ENCODE measurements at regions of chr11 and their contacts with region 1.

Region 1: DNA sequence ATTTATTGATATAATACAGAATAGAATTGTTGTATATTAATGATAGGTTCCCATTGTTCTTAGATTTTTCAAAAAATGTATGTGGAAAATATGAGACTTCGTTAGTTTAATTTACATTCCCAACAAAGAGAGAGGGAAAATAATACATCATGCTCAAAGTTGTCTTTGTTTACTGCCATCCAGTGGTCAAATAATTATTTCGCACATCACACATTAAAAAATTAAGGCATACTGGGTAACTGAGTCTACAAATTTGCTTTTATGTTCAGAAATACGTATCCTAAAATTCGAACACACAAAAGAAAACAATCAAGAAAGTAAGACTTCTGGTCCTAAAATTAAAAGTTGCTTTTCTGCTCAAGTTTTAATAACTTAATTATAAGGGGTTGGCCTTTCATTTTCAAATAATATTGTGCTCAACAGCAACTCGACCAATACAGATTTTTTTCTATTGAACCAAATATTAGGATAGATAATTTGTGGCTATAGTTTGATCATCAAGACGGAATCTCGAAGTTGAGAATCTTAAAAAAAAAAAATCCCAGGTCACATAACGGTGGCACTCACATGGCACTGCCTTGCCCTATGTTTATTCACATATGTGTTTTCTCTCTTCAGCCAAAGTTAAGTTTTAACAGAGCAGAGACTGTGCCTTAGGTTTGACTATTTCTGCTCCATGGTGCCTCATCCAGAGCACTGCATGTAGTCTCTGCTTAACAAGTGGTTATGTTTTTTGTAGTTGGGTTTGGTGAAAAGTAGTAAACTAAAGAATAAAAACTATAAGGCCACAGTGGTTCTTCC is 12.3 kb downstream of the PDGFD start:
- DNase-seq: peak; percentile 43
- H3K4me3 Mint-ChIP-seq: no peak overlapping the region
- H3K27ac Mint-ChIP-seq: no peak overlapping the region
- H3K4me1 Mint-ChIP-seq: no peaks in the 10 kb centered on the region
- H3K27me3 Mint-ChIP-seq: no peaks in the 10 kb centered on the region
- CTCF ChIP-seq: peak; percentile 51

Region 2: DNA sequence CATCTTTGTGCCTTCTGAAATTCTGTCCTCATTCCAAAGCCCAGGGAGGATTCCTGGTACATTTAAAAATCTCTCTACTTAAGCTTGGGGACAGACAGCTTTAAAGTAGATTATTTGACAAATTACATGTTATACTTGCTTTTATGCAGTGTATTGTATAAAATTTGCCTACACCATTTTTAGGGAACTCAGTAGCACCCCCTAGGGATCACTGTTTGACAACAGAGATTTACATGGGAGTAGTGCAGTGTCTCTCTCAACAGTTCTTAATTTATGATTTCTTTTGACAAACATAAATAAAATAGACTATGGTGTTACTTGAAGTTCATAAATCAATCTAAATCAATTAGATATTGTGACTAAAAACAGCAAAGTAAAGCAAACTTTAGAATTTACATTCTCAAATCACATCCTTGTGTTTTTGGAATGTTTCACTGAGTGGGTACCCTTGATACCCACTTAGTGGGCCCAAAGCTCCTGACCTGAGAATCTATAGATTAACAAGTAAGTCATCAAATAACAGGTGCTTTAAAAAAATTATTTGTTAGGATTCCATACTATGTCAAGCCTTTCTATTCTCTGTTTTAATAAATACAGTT is 613.6 kb before region 1 on chr11:
- CTCF ChIA-PET with region 1: no interaction called
- POLR2A ChIA-PET with region 1: no interaction called
- intact Hi-C with region 1: no loop called
- DNase-seq: peak; percentile 59
- H3K4me3 Mint-ChIP-seq: no peak overlapping the region
- H3K27ac Mint-ChIP-seq: no peak overlapping the region
- H3K4me1 Mint-ChIP-seq: peaks cover 13% of the 10 kb centered on the region
- H3K27me3 Mint-ChIP-seq: no peaks in the 10 kb centered on the region
- CTCF ChIP-seq: peak; percentile 52

Region 3: GRCh38 chr11:103927535-103927934 is 224.1 kb before region 1 on chr11:
- CTCF ChIA-PET with region 1: interaction called, 11 read pairs
- POLR2A ChIA-PET with region 1: interaction called, 6 read pairs
- intact Hi-C with region 1: loop called (anchors 1 kb)
- DNase-seq: peak; percentile 43
- H3K4me3 Mint-ChIP-seq: no peak overlapping the region
- H3K27ac Mint-ChIP-seq: no peak overlapping the region
- H3K4me1 Mint-ChIP-seq: peaks cover 7% of the 10 kb centered on the region
- H3K27me3 Mint-ChIP-seq: no peaks in the 10 kb centered on the region
- CTCF ChIP-seq: peak; percentile 54

Region 4: DNA sequence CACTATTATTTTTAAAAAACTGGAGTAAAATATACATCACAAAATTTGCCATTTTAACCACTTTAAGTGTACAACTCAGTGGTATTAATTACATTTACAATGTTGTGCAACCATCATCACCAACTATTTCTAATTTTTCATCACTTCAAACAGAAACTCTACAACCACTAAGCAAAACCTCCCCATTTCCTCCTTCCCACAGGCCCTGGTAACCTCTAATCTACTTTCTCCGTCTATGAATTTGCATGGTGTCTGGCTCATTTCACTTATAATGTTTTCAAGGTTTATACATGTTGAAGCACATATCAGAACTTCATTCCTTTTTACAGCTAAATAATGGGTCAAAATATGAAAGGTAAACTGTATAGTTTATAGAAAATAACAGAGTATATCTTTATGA is 90.8 kb before region 1 on chr11:
- CTCF ChIA-PET with region 1: interaction called, 4 read pairs
- POLR2A ChIA-PET with region 1: interaction called, 12 read pairs
- intact Hi-C with region 1: no loop called
- DNase-seq: no peak
- H3K4me3 Mint-ChIP-seq: no peak overlapping the region
- H3K27ac Mint-ChIP-seq: no peak overlapping the region
- H3K4me1 Mint-ChIP-seq: peaks cover 25% of the 10 kb centered on the region
- H3K27me3 Mint-ChIP-seq: no peaks in the 10 kb centered on the region
- CTCF ChIP-seq: no peak

Region 5: GRCh38 chr11:104136861-104137260 is 14.7 kb before region 1 on chr11:
- CTCF ChIA-PET with region 1: interaction called, 9 read pairs
- POLR2A ChIA-PET with region 1: interaction called, 16 read pairs
- intact Hi-C with region 1: no loop called
- DNase-seq: no peak
- H3K4me3 Mint-ChIP-seq: no peak overlapping the region
- H3K27ac Mint-ChIP-seq: no peak overlapping the region
- H3K4me1 Mint-ChIP-seq: peaks cover 11% of the 10 kb centered on the region
- H3K27me3 Mint-ChIP-seq: no peaks in the 10 kb centered on the region
- CTCF ChIP-seq: no peak

Region 6: GRCh38 chr11:104164028-104164520 is 12.5 kb after region 1 on chr11 and contains the start of gene PDGFD:
- CTCF ChIA-PET with region 1: interaction called, 12 read pairs
- POLR2A ChIA-PET with region 1: interaction called, 9 read pairs
- intact Hi-C with region 1: no loop called
- DNase-seq: peak; percentile 35
- H3K4me3 Mint-ChIP-seq: peak within 1 kb of the TSS; percentile 81
- H3K27ac Mint-ChIP-seq: no peak within 1 kb of the TSS
- H3K4me1 Mint-ChIP-seq: no peaks in the 10 kb centered on the region
- H3K27me3 Mint-ChIP-seq: no peaks in the 10 kb centered on the region
- CTCF ChIP-seq: no peak
- total RNA-seq, gene PDGFD: 0.27 and 0.61 TPM in 2 replicates

Region 7: GRCh38 chr11:104175769-104176168 is 24.2 kb after region 1 on chr11:
- CTCF ChIA-PET with region 1: no interaction called
- POLR2A ChIA-PET with region 1: no interaction called
- intact Hi-C with region 1: no loop called
- DNase-seq: no peak
- H3K4me3 Mint-ChIP-seq: no peak overlapping the region
- H3K27ac Mint-ChIP-seq: no peak overlapping the region
- H3K4me1 Mint-ChIP-seq: no peaks in the 10 kb centered on the region
- H3K27me3 Mint-ChIP-seq: no peaks in the 10 kb centered on the region
- CTCF ChIP-seq: no peak

Measured in MCF 10A (cell line).